ENCODE measurements at regions of chr9 and their contacts with region 1.

Region 1: DNA sequence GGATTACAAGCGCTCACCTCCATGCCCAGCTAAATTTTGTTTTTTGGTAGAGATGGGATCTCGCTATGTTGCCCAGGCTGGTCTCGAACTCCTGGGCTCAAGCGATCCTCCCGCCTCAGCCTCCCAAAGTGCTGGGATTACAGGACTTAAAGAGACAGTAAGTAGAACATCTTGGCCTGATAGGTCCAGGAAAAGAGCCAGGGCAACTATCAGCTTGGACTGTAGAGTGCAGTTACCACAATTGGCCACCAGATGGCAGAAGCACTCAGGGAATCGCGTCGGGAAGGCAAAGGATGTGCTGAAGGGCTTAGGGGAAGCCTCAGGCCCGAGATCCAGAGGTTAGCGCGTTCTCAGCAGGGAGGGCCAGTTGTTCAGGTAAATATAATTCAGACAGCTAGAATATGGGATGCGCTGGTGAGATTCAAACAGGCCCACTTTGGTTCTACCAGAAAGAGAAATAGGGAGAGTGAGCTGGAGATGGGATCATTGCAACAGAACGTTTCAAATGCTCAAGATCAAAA is 21.5 kb downstream of the C9orf57 start:
- DNase-seq: peak; percentile 45
- ATAC-seq: peak; percentile 95
- H3K4me3 ChIP-seq: no peak overlapping the region
- H3K27ac ChIP-seq: no peak overlapping the region
- H3K4me1 ChIP-seq: no peaks in the 10 kb centered on the region; the same call in 1 of the 2 replicates
- H3K27me3 ChIP-seq: no peaks in the 10 kb centered on the region
- CTCF ChIP-seq: peak; percentile 93 to 96 (median 94)
- EP300 ChIP-seq: no peak
- POLR2A ChIP-seq: no peak
- RAD21 ChIP-seq: peak; percentile 95

Region 2: DNA sequence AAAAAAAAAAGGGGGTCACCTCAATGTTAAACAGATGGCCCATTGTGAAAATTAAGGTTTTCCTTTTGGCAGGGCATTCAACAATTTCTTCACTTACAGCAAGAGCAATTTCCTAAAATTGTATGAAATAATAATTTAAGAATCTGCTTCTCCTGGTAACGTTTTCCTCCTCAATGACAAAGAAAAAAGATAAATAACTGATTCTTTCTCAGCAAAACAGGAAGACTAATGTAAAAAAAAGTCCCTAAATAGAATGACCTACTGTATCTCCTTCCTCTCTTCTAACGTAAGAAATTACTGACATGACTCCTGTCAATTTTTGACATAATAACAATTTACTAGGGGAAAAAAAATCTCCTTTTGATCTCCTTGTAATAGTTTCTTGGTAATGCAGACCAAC is 153.5 kb before region 1 on chr9:
- CTCF ChIA-PET with region 1: no interaction called
- POLR2A ChIA-PET with region 1: no interaction called
- RAD21 ChIA-PET with region 1: no interaction called
- SMC1A ChIA-PET with region 1: no interaction called
- in situ Hi-C with region 1: no loop called
- intact Hi-C with region 1: no loop called
- DNase-seq: no peak
- ATAC-seq: no peak
- H3K4me3 ChIP-seq: no peak overlapping the region
- H3K27ac ChIP-seq: no peak overlapping the region
- H3K4me1 ChIP-seq: no peaks in the 10 kb centered on the region
- H3K27me3 ChIP-seq: no peaks in the 10 kb centered on the region
- CTCF ChIP-seq: no peak
- EP300 ChIP-seq: no peak
- POLR2A ChIP-seq: no peak
- RAD21 ChIP-seq: no peak

Region 3: GRCh38 chr9:72133365-72134035 is 94.5 kb after region 1 on chr9:
- CTCF ChIA-PET with region 1: interaction called, 10 read pairs
- POLR2A ChIA-PET with region 1: no interaction called
- RAD21 ChIA-PET with region 1: no interaction called
- SMC1A ChIA-PET with region 1: interaction called, 3 read pairs
- in situ Hi-C with region 1: no loop called
- intact Hi-C with region 1: no loop called
- DNase-seq: no peak
- ATAC-seq: no peak
- H3K4me3 ChIP-seq: no peak overlapping the region
- H3K27ac ChIP-seq: no peak overlapping the region
- H3K4me1 ChIP-seq: no peaks in the 10 kb centered on the region
- H3K27me3 ChIP-seq: no peaks in the 10 kb centered on the region
- CTCF ChIP-seq: no peak
- EP300 ChIP-seq: no peak
- POLR2A ChIP-seq: no peak
- RAD21 ChIP-seq: no peak

Region 4: DNA sequence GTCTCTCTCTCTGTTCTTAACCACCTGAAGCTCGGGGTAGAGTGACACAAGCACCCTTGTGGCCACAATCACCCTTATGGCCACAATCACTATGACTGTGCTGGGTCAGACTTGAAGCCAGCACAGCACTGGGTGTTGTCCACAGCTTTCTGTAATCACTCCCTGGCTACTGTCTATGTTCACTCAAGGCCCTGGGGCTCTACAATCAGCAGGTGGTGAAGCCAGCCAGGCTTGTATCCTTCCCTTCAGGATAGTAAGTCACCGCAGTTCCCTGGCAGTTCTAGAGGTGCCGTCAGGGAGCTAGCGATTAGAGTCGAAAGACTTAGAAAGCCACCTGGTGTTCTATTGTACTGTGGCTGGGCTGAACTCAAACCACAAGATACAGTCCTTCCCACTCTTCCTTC is 154.5 kb after region 1 on chr9:
- CTCF ChIA-PET with region 1: interaction called, 15 read pairs
- POLR2A ChIA-PET with region 1: no interaction called
- RAD21 ChIA-PET with region 1: interaction called, 9 read pairs
- SMC1A ChIA-PET with region 1: interaction called, 22 read pairs
- in situ Hi-C with region 1: no loop called
- intact Hi-C with region 1: loop called (anchors 1 kb)
- DNase-seq: no peak
- ATAC-seq: peak; percentile 98
- H3K4me3 ChIP-seq: no peak overlapping the region
- H3K27ac ChIP-seq: no peak overlapping the region
- H3K4me1 ChIP-seq: no peaks in the 10 kb centered on the region; the same call in 1 of the 2 replicates
- H3K27me3 ChIP-seq: no peaks in the 10 kb centered on the region
- CTCF ChIP-seq: no peak
- EP300 ChIP-seq: no peak
- POLR2A ChIP-seq: no peak
- RAD21 ChIP-seq: no peak

Region 5: DNA sequence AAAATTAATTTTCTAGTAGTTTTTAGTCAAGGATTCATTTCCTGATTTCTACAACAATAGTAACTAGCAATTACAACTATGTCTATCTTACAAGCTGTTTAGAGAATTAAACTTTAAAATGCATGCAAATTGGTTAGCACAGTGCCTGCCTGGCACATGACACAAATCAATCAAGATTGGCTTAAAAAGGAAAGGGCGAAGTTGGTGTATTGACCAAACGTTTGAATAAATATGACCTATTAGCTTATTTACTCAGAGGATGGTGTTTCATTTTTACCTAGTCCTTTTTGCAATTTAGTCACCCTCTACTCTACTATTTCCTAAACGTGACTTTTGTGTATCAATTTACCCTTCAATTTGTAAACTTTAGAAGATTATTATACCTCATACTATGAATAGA is 193.8 kb after region 1 on chr9:
- CTCF ChIA-PET with region 1: no interaction called
- POLR2A ChIA-PET with region 1: no interaction called
- RAD21 ChIA-PET with region 1: no interaction called
- SMC1A ChIA-PET with region 1: no interaction called
- in situ Hi-C with region 1: no loop called
- intact Hi-C with region 1: no loop called
- DNase-seq: no peak
- ATAC-seq: no peak
- H3K4me3 ChIP-seq: no peak overlapping the region
- H3K27ac ChIP-seq: no peak overlapping the region
- H3K4me1 ChIP-seq: no peaks in the 10 kb centered on the region
- H3K27me3 ChIP-seq: no peaks in the 10 kb centered on the region
- CTCF ChIP-seq: no peak
- EP300 ChIP-seq: no peak
- POLR2A ChIP-seq: no peak
- RAD21 ChIP-seq: no peak

Region 6: GRCh38 chr9:72262063-72262462 is 223.1 kb after region 1 on chr9:
- CTCF ChIA-PET with region 1: interaction called, 10 read pairs
- POLR2A ChIA-PET with region 1: no interaction called
- RAD21 ChIA-PET with region 1: interaction called, 4 read pairs
- SMC1A ChIA-PET with region 1: interaction called, 11 read pairs
- in situ Hi-C with region 1: no loop called
- intact Hi-C with region 1: no loop called
- DNase-seq: no peak
- ATAC-seq: peak; percentile 87
- H3K4me3 ChIP-seq: no peak overlapping the region
- H3K27ac ChIP-seq: no peak overlapping the region
- H3K4me1 ChIP-seq: no peaks in the 10 kb centered on the region
- H3K27me3 ChIP-seq: no peaks in the 10 kb centered on the region
- CTCF ChIP-seq: no peak
- EP300 ChIP-seq: no peak
- POLR2A ChIP-seq: no peak
- RAD21 ChIP-seq: no peak

Region 7: DNA sequence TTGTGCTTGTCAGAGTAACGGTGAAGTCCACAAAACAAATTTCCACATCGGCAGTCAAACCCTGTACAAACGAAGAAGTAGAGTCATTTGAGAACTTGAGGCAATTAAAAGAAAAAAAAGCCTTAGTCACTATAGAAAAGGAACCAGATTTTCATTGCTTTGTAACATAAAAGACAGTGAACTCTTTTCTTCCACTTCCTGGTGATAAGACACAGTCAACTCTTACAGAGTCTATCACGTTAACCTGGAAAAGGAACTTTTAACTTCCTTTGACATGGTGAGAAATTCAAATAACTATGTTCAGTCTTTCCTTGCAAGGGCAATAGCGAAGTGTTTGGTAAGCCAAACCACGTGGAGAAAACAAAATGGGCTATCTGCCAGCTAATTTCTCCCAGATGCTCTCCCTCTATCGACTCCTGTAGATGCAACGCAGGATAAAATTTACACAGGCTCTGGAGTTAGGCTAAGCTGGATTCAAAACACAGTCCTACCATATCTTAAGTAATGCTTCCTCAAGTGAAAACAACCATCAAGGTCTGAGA is 317.2 kb after region 1 on chr9:
- CTCF ChIA-PET with region 1: no interaction called
- POLR2A ChIA-PET with region 1: no interaction called
- RAD21 ChIA-PET with region 1: no interaction called
- SMC1A ChIA-PET with region 1: no interaction called
- in situ Hi-C with region 1: no loop called
- intact Hi-C with region 1: loop called (anchors 10 kb)
- DNase-seq: no peak
- ATAC-seq: no peak
- H3K4me3 ChIP-seq: no peak overlapping the region
- H3K27ac ChIP-seq: no peak overlapping the region
- H3K4me1 ChIP-seq: no peaks in the 10 kb centered on the region
- H3K27me3 ChIP-seq: no peaks in the 10 kb centered on the region
- CTCF ChIP-seq: no peak
- EP300 ChIP-seq: no peak
- POLR2A ChIP-seq: no peak
- RAD21 ChIP-seq: no peak

Region 8: GRCh38 chr9:72443855-72444254 is 404.9 kb after region 1 on chr9:
- CTCF ChIA-PET with region 1: no interaction called
- POLR2A ChIA-PET with region 1: no interaction called
- RAD21 ChIA-PET with region 1: no interaction called
- SMC1A ChIA-PET with region 1: no interaction called
- in situ Hi-C with region 1: no loop called
- intact Hi-C with region 1: no loop called
- DNase-seq: peak; percentile 85
- ATAC-seq: peak; percentile 97
- H3K4me3 ChIP-seq: no peak overlapping the region
- H3K27ac ChIP-seq: peak overlapping the region; percentile 79; the same call in 1 of the 2 replicates
- H3K4me1 ChIP-seq: peaks cover 15% of the 10 kb centered on the region
- H3K27me3 ChIP-seq: no peaks in the 10 kb centered on the region
- CTCF ChIP-seq: peak in 1 of 3 experiments; percentile 21; a peak in 2 of 6 replicates
- EP300 ChIP-seq: peak; percentile 61 to 88
- POLR2A ChIP-seq: no peak
- RAD21 ChIP-seq: peak; percentile 49

Region 9: GRCh38 chr9:72827950-72828731 is 789.2 kb after region 1 on chr9:
- CTCF ChIA-PET with region 1: interaction called, 6 read pairs
- POLR2A ChIA-PET with region 1: no interaction called
- RAD21 ChIA-PET with region 1: interaction called, 3 read pairs
- SMC1A ChIA-PET with region 1: no interaction called
- in situ Hi-C with region 1: loop called (anchors 10 kb)
- intact Hi-C with region 1: no loop called
- DNase-seq: no peak
- ATAC-seq: no peak
- H3K4me3 ChIP-seq: no peak overlapping the region
- H3K27ac ChIP-seq: no peak overlapping the region
- H3K4me1 ChIP-seq: no peaks in the 10 kb centered on the region
- H3K27me3 ChIP-seq: no peaks in the 10 kb centered on the region
- CTCF ChIP-seq: no peak
- EP300 ChIP-seq: no peak
- POLR2A ChIP-seq: no peak
- RAD21 ChIP-seq: no peak

Region 10: GRCh38 chr9:73451003-73451402 is 1412.1 kb after region 1 on chr9:
- CTCF ChIA-PET with region 1: no interaction called
- POLR2A ChIA-PET with region 1: no interaction called
- RAD21 ChIA-PET with region 1: no interaction called
- SMC1A ChIA-PET with region 1: no interaction called
- in situ Hi-C with region 1: no loop called
- intact Hi-C with region 1: no loop called
- DNase-seq: no peak
- ATAC-seq: no peak
- H3K4me3 ChIP-seq: no peak overlapping the region
- H3K27ac ChIP-seq: no peak overlapping the region
- H3K4me1 ChIP-seq: no peaks in the 10 kb centered on the region
- H3K27me3 ChIP-seq: no peaks in the 10 kb centered on the region
- CTCF ChIP-seq: no peak
- EP300 ChIP-seq: no peak
- POLR2A ChIP-seq: no peak
- RAD21 ChIP-seq: no peak